HepG2 (cell line): ENCODE measurements at regions of chr5 and their contacts with region 1.

Region 1: DNA sequence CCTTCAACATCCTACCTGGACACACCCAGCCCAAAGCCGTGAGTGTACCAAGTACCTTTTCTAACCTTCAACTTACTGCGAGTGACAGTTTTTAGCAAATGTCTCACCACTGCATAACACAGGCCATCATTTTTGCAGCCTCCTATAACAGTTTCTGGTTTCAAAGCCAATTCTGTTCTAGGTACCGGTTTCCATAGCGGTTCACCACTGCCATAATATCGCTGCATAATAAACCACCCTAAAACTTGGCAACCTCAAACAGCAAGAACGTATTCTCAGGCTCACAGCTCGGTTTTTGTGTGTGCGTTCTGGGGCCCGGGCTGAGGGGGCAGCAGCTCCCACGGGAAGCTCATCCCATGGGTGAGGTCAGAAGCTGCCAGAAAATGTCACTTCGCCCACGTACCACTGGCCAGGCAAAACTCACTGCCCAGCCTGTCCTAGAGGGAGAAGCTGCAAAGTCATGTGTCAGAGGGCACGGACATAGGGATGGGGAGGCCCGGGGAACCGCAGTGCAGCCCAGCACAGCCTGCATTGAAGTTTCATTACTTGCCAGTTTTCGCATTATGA is 15.9 kb upstream of the ADAMTS2 start:
- DNase-seq: no peak
- ATAC-seq: no peak
- H3K4me3 ChIP-seq: no peak overlapping the region
- H3K27ac ChIP-seq: no peak overlapping the region
- H3K4me1 ChIP-seq: no peaks in the 10 kb centered on the region
- H3K27me3 ChIP-seq: peaks cover under 1 to 1% of the 10 kb centered on the region in 2 experiments; a peak in 2 of 5 replicates
- CTCF ChIP-seq: no peak
- EP300 ChIP-seq: no peak
- POLR2A ChIP-seq: no peak
- RAD21 ChIP-seq: no peak

Region 2: DNA sequence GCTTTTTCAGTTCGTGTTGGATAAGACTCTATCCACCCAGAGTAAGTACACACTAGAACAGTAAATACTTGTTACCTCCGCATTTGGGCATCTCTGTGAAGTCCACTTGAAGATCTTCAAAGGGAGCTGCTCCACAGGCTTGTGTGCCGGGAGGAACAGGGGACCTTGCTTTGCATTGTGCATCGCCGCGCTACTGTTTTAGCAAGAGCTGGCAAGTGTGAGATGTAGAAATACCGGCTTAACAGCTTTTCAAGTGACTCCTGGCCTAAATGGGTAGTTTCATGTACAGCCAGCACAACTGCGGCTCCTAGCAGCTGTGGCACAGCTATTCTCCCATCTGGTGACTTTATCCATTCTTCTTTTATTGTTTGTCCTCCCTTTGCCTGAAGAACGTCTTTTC is 309.3 kb before region 1 on chr5:
- CTCF ChIA-PET with region 1: no interaction called
- POLR2A ChIA-PET with region 1: no interaction called
- in situ Hi-C with region 1: no loop called
- intact Hi-C with region 1: loop called (anchors 5 kb)
- DNase-seq: no peak
- ATAC-seq: no peak
- H3K4me3 ChIP-seq: no peak overlapping the region
- H3K27ac ChIP-seq: no peak overlapping the region
- H3K4me1 ChIP-seq: no peaks in the 10 kb centered on the region
- H3K27me3 ChIP-seq: no peaks in the 10 kb centered on the region; a peak in 1 of 5 replicates
- CTCF ChIP-seq: no peak
- EP300 ChIP-seq: no peak
- POLR2A ChIP-seq: no peak
- RAD21 ChIP-seq: no peak

Region 3: DNA sequence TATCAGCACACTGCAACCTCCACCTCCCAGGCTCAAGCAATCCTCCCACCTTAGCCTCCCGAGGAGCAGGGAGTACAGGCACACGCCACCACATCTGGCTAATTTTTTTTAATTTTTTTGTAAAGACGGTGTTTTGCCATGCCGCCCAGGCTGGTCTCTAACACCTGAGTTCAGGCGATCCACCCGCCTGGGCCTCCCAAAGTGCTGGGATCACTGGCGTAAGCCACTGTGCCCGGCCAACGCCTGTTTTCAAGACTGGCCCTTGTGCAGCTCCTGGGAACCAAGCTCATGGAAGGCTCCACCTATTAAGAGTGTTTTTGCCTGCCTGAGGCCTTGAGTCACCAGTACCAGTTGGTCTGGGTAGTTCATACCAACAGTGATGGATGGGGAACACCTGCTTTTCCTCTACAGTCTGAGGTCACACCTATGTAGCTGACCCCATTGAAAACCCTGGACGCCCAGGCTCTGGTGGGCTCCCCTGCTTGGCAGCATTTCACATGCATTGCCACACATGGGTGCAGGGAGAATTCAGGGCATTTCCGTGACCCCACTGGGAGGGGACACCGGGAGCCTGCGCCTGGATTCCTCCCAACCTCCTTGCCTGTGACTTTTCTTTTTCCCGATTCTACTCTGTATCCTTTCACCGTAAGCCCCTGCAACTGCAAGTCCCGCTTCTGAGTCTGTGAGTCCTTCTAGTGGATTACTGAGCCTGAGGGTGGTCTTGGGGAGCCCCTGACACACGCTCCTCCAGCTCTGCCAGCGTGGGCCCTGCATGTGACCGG is 237.4 kb before region 1 on chr5:
- CTCF ChIA-PET with region 1: no interaction called
- POLR2A ChIA-PET with region 1: no interaction called
- in situ Hi-C with region 1: no loop called
- intact Hi-C with region 1: no loop called
- DNase-seq: no peak
- ATAC-seq: no peak
- H3K4me3 ChIP-seq: no peak overlapping the region
- H3K27ac ChIP-seq: no peak overlapping the region
- H3K4me1 ChIP-seq: no peaks in the 10 kb centered on the region
- H3K27me3 ChIP-seq: no peaks in the 10 kb centered on the region
- CTCF ChIP-seq: no peak
- EP300 ChIP-seq: no peak
- POLR2A ChIP-seq: no peak
- RAD21 ChIP-seq: no peak

Region 4: DNA sequence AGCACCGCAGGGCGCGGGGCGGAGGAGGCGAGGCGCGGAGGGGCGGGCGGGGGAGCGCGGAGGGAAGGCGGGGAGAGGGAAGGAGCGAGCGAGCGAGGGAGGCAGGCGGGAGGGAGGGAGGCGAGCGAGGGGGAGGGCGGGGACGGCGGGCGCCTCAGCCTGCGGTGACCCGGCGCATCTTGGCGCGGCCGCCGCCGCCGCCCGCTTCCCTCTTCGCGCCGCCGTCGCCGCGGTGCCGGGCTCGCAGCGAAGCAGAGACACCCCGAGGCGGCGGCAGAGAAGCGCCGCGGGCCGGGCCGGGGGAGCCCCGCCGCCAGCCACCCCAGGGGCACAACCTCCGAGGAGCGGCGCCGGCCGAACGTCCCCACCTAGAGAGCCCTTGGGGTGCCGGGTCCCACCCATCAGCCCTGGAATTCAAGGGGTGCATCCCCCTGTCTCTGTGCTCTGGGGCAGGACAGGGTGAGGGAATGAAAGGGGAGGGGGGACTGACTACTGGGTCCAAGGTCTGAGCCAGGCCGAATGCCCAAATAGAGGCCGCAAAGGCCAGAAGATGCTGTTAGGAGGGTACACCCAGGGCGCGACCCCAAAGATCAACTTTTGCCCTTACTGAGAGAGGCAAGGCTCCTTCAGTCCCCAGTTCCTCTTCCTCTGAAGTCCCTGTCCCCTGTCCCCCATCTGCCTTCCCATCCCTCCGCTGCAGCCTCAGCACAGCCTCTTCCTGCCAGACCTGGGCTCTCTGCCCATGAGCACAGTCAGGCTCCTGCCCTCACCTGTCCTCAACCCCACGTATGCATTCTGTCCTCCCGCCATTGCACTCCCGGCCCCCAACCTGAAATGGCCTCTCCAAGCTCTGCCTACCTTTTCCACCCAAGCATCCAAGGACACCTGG is 15.4 kb before region 1 on chr5 and contains the start of gene ADAMTS2:
- CTCF ChIA-PET with region 1: no interaction called
- POLR2A ChIA-PET with region 1: no interaction called
- in situ Hi-C with region 1: no loop called
- intact Hi-C with region 1: no loop called
- DNase-seq: no peak
- ATAC-seq: no peak
- H3K4me3 ChIP-seq: no peak within 1 kb of the TSS
- H3K27ac ChIP-seq: no peak within 1 kb of the TSS
- H3K4me1 ChIP-seq: no peaks in the 10 kb centered on the region
- H3K27me3 ChIP-seq: peaks cover 16 to 84% of the 10 kb centered on the region in 2 experiments
- CTCF ChIP-seq: no peak
- EP300 ChIP-seq: no peak
- POLR2A ChIP-seq: no peak
- RAD21 ChIP-seq: no peak
- total RNA-seq, gene ADAMTS2: 0.18 and 0.24 TPM in 2 replicates